ENCODE measurements at regions of chr6 and their contacts with region 1.

Region 1: DNA sequence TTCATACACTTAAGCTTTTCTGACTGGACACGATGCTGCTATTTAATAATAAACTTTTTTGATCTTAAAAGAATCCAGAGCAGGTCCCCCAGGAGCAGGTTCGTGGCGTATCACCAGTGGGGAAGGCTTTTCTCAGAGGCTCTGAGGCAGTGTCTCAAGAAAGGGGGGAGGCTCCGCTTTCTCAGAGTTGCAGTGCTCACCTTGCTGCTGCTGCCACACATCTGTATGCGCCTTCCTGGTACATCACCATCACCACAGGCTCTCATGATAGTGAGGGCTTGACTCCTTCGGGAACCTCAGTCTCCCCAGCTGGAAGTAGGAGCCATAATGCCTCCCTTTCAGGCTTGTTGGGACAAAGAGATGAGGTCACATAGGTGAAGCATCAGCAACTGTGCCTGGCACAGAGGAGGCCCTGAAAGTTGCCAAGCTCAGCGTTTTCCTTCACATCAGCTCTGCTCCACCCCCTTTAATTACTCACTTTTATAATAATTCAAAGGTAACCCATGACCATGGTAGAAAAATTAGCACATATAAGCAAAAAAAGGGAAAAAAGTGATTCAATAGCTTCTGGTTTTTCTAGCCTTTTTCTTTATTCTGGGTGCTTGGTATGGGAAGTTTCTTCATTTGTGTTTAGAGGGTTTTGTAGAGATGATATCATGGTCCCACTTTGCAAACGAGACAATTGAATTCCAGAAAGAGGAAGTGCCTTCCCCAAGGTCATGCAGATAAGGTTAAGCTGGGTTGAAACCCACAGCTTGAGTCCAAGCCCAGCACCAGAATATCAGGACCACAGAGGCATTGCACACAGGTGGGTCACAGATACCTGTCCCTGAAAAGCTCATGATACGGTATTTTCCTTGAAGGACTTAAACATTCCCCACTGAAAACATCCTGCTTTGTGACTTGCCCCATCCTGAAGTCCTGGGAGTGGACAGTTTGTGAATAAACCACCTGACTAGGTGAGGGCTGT is 24.5 kb downstream of the SRSF3 start:
- DNase-seq: peak; percentile 11 to 20
- H3K4me3 ChIP-seq: no peak overlapping the region
- H3K27ac ChIP-seq: no peak overlapping the region
- H3K4me1 ChIP-seq: peaks cover 0 to 31% (median 10%) of the 10 kb centered on the region in 4 donors
- H3K27me3 ChIP-seq: no peaks in the 10 kb centered on the region
- CTCF ChIP-seq: no peak

Region 2: GRCh38 chr6:36759148-36759759 is 140.6 kb after region 1 on chr6:
- intact Hi-C with region 1: loop called (anchors 2 kb)
- DNase-seq: peak; percentile 81 to 88
- H3K4me3 ChIP-seq: no peak overlapping the region
- H3K27ac ChIP-seq: no peak overlapping the region
- H3K4me1 ChIP-seq: peaks cover 0 to 7% (median 3%) of the 10 kb centered on the region in 4 donors
- H3K27me3 ChIP-seq: no peaks in the 10 kb centered on the region
- CTCF ChIP-seq: peak; percentile 94 to 99